Activated naive CD4-positive, alpha-beta T cell treated with anti-CD3 and anti-CD28 coated beads for 36 hours (primary cell): ENCODE measurements at regions of chr11 and their contacts with region 1.

Region 1: DNA sequence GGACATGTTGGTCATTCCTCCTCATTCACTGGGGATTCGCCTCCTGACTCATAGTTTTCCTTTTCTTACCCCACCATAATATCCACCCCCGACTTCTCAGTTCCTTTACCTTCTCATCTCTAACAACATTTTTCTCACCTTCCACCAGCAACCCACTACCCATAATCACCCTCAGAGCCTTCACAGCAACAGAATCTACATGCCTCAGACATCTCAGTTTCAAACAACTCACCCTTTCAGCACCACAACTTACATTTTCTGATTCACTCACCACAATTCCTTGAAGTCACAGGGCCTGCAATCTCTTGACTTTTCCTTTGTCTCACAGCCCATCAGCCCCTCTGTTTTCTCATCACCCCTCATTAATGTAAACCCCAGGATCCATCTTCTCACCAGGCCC is 2.3 kb upstream of the MTNR1B start:
- DNase-seq: no peak
- H3K4me3 Mint-ChIP-seq: no peak overlapping the region
- H3K27ac Mint-ChIP-seq: no peak overlapping the region
- H3K4me1 Mint-ChIP-seq: peaks cover 5% of the 10 kb centered on the region
- H3K27me3 Mint-ChIP-seq: peaks cover 17% of the 10 kb centered on the region

Region 2: GRCh38 chr11:92948116-92948515 is 19.1 kb before region 1 on chr11:
- CTCF ChIA-PET with region 1: no interaction called
- intact Hi-C with region 1: no loop called
- DNase-seq: no peak
- H3K4me3 Mint-ChIP-seq: no peak overlapping the region
- H3K27ac Mint-ChIP-seq: no peak overlapping the region
- H3K4me1 Mint-ChIP-seq: no peaks in the 10 kb centered on the region
- H3K27me3 Mint-ChIP-seq: peaks cover 7% of the 10 kb centered on the region

Region 3: DNA sequence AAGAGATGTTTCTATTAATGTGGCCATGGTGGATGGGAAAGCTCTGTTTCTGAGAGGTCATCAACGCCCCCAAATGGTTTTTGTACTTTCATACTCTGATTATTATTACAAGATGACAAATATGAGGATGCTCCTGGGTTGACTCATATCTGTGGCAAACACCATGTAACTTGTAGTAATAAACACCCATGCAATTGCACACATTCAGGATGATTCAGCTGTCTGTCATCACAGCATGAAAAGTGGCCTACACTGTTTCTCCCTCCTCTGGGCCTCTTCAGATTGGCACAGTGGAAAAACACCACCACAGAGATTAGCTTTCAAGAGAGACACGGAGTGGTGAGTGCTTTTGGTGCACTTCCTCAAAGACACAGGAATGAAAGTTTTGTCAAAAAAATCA is 87.7 kb after region 1 on chr11:
- CTCF ChIA-PET with region 1: interaction called, 3 read pairs
- intact Hi-C with region 1: loop called (anchors 2 kb)
- DNase-seq: peak; percentile 42
- H3K4me3 Mint-ChIP-seq: no peak overlapping the region
- H3K27ac Mint-ChIP-seq: peak overlapping the region; percentile 75
- H3K4me1 Mint-ChIP-seq: peaks cover 7% of the 10 kb centered on the region
- H3K27me3 Mint-ChIP-seq: peaks cover 2% of the 10 kb centered on the region

Region 4: GRCh38 chr11:93073026-93073425 is 105.8 kb after region 1 on chr11:
- CTCF ChIA-PET with region 1: no interaction called
- intact Hi-C with region 1: no loop called
- DNase-seq: no peak
- H3K4me3 Mint-ChIP-seq: no peak overlapping the region
- H3K27ac Mint-ChIP-seq: no peak overlapping the region
- H3K4me1 Mint-ChIP-seq: no peaks in the 10 kb centered on the region
- H3K27me3 Mint-ChIP-seq: peaks cover 11% of the 10 kb centered on the region